ENCODE measurements at regions of chr3 and their contacts with region 1.

Region 1: DNA sequence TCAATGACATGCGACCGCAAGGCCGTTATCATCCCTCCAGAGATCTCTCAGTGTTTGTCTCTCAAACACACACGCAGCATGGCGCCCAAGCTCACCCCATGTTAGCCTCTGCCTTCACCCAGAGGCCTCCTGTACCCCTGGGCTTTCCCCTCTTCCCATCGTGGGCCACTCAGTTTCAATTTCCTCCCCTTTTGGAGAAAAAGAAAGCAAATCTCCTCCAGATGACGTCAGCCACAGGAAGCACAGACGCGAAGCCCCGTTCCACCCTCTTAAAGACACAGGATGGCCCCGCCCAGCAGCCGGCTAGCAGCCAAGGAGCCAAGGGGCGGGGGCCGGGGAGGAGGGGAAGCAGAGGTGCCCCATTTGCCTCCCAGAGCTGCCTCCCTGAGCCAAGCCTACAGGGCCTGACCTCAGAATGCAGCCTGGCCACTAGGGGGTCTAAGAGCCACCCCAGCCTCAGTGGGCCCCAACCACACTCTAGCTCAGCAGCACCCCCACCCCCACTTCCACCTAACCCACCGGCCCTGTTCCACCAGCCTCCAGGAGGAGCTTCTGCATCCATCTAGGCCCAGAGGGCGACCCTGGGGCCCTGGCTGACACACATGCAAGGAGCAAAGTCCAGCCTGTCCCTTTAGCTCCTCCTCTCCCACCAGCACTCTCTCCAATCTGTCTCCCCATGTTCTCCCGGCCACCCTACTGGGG is 26.5 kb downstream of the ATRIP start:
- DNase-seq: peak; percentile 93
- ATAC-seq: peak; percentile 87
- H3K4me3 Mint-ChIP-seq: peak overlapping the region; percentile 88
- H3K27ac Mint-ChIP-seq: peak overlapping the region; percentile 99
- H3K4me1 Mint-ChIP-seq: peaks cover 42% of the 10 kb centered on the region
- H3K27me3 Mint-ChIP-seq: no peaks in the 10 kb centered on the region

Region 2: GRCh38 chr3:48400824-48401433 is 72.1 kb before region 1 on chr3:
- POLR2A ChIA-PET with region 1: no interaction called
- DNase-seq: peak; percentile 46
- ATAC-seq: peak; percentile 67
- H3K4me3 Mint-ChIP-seq: no peak overlapping the region
- H3K27ac Mint-ChIP-seq: no peak overlapping the region
- H3K4me1 Mint-ChIP-seq: peaks cover 1% of the 10 kb centered on the region
- H3K27me3 Mint-ChIP-seq: peaks cover 2% of the 10 kb centered on the region

Region 3: DNA sequence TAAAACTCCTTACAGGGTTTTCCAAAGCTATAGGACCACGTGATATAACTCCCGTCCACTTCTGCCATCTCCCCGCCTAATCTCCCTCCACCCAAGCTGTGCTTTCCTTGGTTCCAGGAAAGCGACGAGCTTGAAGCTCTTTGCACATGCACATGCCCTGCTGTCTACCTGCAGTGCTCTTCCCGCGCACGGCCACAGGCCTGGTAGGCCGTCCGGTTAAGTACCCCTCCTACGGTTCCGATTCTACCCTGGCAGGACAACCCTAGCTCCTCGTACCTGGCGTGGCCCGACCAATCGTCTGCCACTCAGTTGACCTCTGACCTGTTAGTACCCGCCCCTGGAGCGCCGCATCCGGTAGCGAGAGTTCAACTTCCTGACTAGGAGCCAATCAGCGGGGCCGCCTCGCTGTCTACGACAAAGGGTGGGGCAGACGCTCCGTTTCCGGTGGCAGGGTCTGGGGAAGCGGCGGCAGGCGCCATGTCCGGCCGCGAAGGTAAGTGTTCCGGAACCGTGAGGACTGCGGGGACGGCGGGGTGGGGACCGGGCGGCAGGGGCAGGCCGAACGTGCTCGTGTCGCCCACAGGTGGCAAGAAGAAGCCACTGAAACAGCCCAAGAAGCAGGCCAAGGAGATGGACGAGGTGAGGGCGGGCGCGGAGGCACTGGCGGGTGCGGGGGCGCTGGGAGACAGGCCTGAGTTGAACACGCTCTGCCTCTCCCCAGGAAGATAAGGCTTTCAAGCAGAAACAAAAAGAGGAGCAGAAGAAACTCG is 33.1 kb before region 1 on chr3 and contains the starts of genes CCDC51 and TMA7:
- POLR2A ChIA-PET with region 1: interaction called, 57 read pairs
- DNase-seq: peak; percentile 95
- ATAC-seq: peak; percentile 92
- H3K4me3 Mint-ChIP-seq: peak within 1 kb of the TSS; percentile 99
- H3K27ac Mint-ChIP-seq: peak within 1 kb of the TSS; percentile 97
- H3K4me1 Mint-ChIP-seq: peaks cover 33% of the 10 kb centered on the region
- H3K27me3 Mint-ChIP-seq: no peaks in the 10 kb centered on the region
- total RNA-seq, gene CCDC51: 11.5 to 12.2 TPM
- total RNA-seq, gene TMA7: 260 to 263 TPM

Region 4: DNA sequence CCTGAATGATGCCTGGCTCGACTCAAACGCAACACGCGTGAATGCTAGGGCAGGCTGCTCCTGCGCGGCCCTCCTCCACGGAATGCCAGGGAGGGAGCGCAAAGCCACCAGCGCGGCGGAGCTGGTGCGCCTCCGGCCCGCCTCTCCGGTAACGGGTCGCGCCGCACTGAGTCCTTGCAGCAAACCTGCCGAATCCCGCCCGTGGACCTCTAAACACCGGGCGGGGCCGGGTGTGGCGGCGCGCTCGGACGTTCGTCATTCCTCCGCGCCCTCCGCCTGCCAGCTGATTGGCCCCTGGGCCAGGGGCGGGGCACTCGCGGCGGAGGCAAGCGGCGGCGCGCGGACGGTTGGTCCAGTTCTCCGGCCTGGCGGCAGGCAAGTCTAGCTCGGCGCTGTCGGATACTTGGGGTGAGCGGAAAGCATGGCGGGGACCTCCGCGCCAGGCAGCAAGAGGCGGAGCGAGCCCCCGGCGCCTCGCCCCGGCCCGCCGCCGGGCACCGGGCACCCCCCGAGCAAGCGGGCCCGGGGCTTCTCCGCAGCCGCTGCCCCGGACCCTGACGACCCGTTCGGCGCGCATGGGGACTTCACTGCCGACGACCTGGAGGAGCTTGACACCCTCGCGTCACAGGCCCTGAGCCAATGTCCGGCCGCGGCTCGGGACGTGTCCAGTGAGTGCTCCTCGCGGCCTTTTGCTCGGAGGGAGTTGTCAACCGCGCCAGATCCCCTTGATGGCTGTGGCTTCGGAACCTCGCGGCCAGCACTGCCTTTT is 26.5 kb before region 1 on chr3 and contains the start of gene ATRIP:
- POLR2A ChIA-PET with region 1: interaction called, 57 read pairs
- DNase-seq: peak; percentile 95
- ATAC-seq: peak; percentile 97
- H3K4me3 Mint-ChIP-seq: peak within 1 kb of the TSS; percentile 95
- H3K27ac Mint-ChIP-seq: peak within 1 kb of the TSS; percentile 95
- H3K4me1 Mint-ChIP-seq: peaks cover 36% of the 10 kb centered on the region
- H3K27me3 Mint-ChIP-seq: no peaks in the 10 kb centered on the region
- total RNA-seq, gene ATRIP: 17.0 to 19.9 TPM

Region 5: GRCh38 chr3:48556793-48557626 is 83.9 kb after region 1 on chr3 and contains the start of gene PFKFB4:
- POLR2A ChIA-PET with region 1: interaction called, 16 read pairs
- DNase-seq: peak; percentile 99
- ATAC-seq: peak; percentile 89
- H3K4me3 Mint-ChIP-seq: peak within 1 kb of the TSS; percentile 86
- H3K27ac Mint-ChIP-seq: peak within 1 kb of the TSS; percentile 80
- H3K4me1 Mint-ChIP-seq: peaks cover 46% of the 10 kb centered on the region
- H3K27me3 Mint-ChIP-seq: no peaks in the 10 kb centered on the region
- total RNA-seq, gene PFKFB4: 56.8 to 60.7 TPM

Measured in activated naive CD8-positive, alpha-beta T cell treated with anti-CD3 and anti-CD28 coated beads, Interleukin-2, amount 10 ng/mL, durations not matched to agents 7 days and 5 days (primary cell).